Activated CD8-positive, alpha-beta memory T cell treated with anti-CD3 and anti-CD28 coated beads, Interleukin-2, amount 10 ng/mL, durations not matched to agents 7 days and 5 days (primary cell): ENCODE measurements at regions of chr17 and their contacts with region 1.

Region 1: GRCh38 chr17:27805520-27806146 is 5.3 kb upstream of the NOS2 start:
- DNase-seq: peak; percentile 92
- ATAC-seq: peak; percentile 61
- H3K4me3 Mint-ChIP-seq: peak overlapping the region; percentile 50
- H3K27ac Mint-ChIP-seq: peak overlapping the region; percentile 91
- H3K4me1 Mint-ChIP-seq: peaks cover 46% of the 10 kb centered on the region
- H3K27me3 Mint-ChIP-seq: no peaks in the 10 kb centered on the region

Region 2: GRCh38 chr17:27674335-27674734 is 131.3 kb before region 1 on chr17:
- CTCF ChIA-PET with region 1: no interaction called
- DNase-seq: no peak
- ATAC-seq: no peak
- H3K4me3 Mint-ChIP-seq: no peak overlapping the region
- H3K27ac Mint-ChIP-seq: no peak overlapping the region
- H3K4me1 Mint-ChIP-seq: no peaks in the 10 kb centered on the region
- H3K27me3 Mint-ChIP-seq: peaks cover 4% of the 10 kb centered on the region

Region 3: GRCh38 chr17:27760069-27760885 is 45.4 kb before region 1 on chr17:
- CTCF ChIA-PET with region 1: interaction called, 55 read pairs
- DNase-seq: peak; percentile 77
- ATAC-seq: peak; percentile 63
- H3K4me3 Mint-ChIP-seq: no peak overlapping the region
- H3K27ac Mint-ChIP-seq: no peak overlapping the region
- H3K4me1 Mint-ChIP-seq: no peaks in the 10 kb centered on the region
- H3K27me3 Mint-ChIP-seq: no peaks in the 10 kb centered on the region

Region 4: GRCh38 chr17:27834571-27834970 is 28.9 kb after region 1 on chr17:
- CTCF ChIA-PET with region 1: interaction called, 11 read pairs
- DNase-seq: no peak
- ATAC-seq: no peak
- H3K4me3 Mint-ChIP-seq: no peak overlapping the region
- H3K27ac Mint-ChIP-seq: no peak overlapping the region
- H3K4me1 Mint-ChIP-seq: no peaks in the 10 kb centered on the region
- H3K27me3 Mint-ChIP-seq: peaks cover 2% of the 10 kb centered on the region

Region 5: GRCh38 chr17:27853121-27853520 is 47.5 kb after region 1 on chr17:
- CTCF ChIA-PET with region 1: interaction called, 10 read pairs
- DNase-seq: no peak
- ATAC-seq: no peak
- H3K4me3 Mint-ChIP-seq: no peak overlapping the region
- H3K27ac Mint-ChIP-seq: no peak overlapping the region
- H3K4me1 Mint-ChIP-seq: peaks cover 15% of the 10 kb centered on the region
- H3K27me3 Mint-ChIP-seq: no peaks in the 10 kb centered on the region

Region 6: GRCh38 chr17:27892866-27893769 is 87.5 kb after region 1 on chr17 and contains the start of gene LYRM9:
- CTCF ChIA-PET with region 1: interaction called, 183 read pairs
- DNase-seq: peak; percentile 93
- ATAC-seq: peak; percentile 99
- H3K4me3 Mint-ChIP-seq: peak within 1 kb of the TSS; percentile 77
- H3K27ac Mint-ChIP-seq: peak within 1 kb of the TSS; percentile 52
- H3K4me1 Mint-ChIP-seq: peaks cover 19% of the 10 kb centered on the region
- H3K27me3 Mint-ChIP-seq: peaks cover 30% of the 10 kb centered on the region
- total RNA-seq, gene LYRM9: 1.7 to 5.1 TPM